B cell (primary cell): ENCODE measurements at regions of chr11 and their contacts with region 1.

Region 1: GRCh38 chr11:114166897-114167323 is 107.4 kb downstream of the ZBTB16 start:
- DNase-seq: no peak
- ATAC-seq: peak; percentile 22
- H3K4me3 ChIP-seq: peak overlapping the region in 1 of 5 experiments; percentile 40
- H3K4me3 Mint-ChIP-seq: peak overlapping the region; percentile 64
- H3K27ac ChIP-seq: no peak overlapping the region
- H3K27ac Mint-ChIP-seq: peak overlapping the region; percentile 32
- H3K4me1 ChIP-seq: peaks cover 76 to 81% of the 10 kb centered on the region in 2 donors
- H3K4me1 Mint-ChIP-seq: peaks cover 83% of the 10 kb centered on the region
- H3K27me3 ChIP-seq: no peaks in the 10 kb centered on the region
- H3K27me3 Mint-ChIP-seq: peaks cover 7% of the 10 kb centered on the region
- CTCF ChIP-seq: no peak

Region 2: DNA sequence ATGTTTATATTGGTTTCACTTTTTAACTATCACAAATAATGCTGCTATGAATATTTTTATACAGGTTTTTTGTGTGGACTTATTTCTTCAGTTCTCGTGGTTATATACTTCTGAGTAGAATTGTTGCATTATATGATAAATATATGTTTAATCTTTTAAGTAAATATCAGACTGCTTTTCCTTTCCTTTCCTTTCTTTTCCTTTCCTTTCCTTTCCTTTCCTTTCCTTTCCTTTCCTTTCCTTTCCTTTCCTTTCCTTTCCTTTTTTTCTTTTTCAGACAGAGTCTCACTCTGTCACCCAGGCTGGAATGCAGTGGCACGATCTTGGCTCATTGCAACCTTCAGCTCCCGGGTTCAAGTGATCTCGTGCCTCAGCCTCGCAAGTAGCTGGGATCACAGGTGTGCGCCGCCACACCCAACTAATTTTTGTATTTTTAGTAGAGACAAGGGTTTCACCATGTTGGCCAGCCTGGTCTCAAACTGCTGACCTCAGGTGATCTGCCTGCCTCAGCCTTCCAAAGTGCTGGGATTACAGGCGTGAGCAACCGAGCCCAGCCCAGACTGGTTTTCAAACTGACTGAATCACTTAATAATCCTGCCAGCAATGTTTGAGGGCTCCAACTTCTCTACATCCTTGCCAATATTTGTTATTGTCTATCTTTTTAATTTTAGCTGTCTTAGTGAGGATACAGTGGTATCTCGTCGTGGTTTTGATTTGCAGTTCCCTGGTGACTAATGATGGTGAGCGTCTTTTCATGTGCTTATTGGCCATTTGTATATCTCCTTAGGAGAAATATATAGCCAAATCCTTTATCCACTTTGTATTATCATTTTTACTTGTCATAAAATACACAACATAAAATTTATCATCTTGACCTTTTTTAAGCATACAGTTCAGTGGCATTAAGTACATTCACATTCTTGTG is 240.4 kb before region 1 on chr11:
- CTCF ChIA-PET with region 1: no interaction called
- POLR2A ChIA-PET with region 1: interaction called, 14 read pairs
- intact Hi-C with region 1: no loop called
- DNase-seq: no peak
- ATAC-seq: no peak
- H3K4me3 ChIP-seq: no peak overlapping the region
- H3K4me3 Mint-ChIP-seq: no peak overlapping the region
- H3K27ac ChIP-seq: no peak overlapping the region
- H3K27ac Mint-ChIP-seq: no peak overlapping the region
- H3K4me1 ChIP-seq: peaks cover 0 to 4% of the 10 kb centered on the region in 2 donors
- H3K4me1 Mint-ChIP-seq: peaks cover 3% of the 10 kb centered on the region
- H3K27me3 ChIP-seq: no peaks in the 10 kb centered on the region
- H3K27me3 Mint-ChIP-seq: peaks cover 10% of the 10 kb centered on the region
- CTCF ChIP-seq: no peak

Region 3: DNA sequence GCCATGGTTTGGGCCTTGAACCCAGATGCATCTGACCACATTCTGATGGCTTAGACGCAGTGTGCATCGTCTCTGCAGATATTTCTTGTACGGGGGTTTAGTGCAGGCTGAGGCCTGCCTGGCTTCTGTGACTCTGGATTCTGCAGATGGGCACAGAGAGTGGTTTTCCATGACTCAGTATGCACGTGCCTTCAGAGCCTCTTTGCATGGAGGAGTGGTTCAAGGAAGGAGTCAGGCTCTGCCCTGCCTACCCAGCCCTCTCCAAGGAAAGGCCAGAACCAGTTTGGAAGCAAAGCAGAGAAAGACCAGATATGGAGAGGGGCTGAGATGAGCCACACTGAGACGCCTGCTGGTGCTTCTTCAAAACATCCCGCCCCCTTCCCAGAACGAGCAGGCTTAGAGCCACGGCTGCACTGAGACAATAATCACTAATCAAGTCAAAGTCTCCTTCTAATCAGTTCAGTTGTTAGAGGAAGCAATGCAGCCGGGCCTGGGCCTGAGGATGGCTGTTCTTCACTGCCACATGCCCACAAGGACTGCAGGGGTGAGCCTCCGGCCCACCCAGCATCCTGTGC is 820.4 kb after region 1 on chr11:
- CTCF ChIA-PET with region 1: no interaction called
- POLR2A ChIA-PET with region 1: no interaction called
- intact Hi-C with region 1: no loop called
- DNase-seq: no peak
- ATAC-seq: no peak
- H3K4me3 ChIP-seq: no peak overlapping the region
- H3K4me3 Mint-ChIP-seq: no peak overlapping the region
- H3K27ac ChIP-seq: no peak overlapping the region
- H3K27ac Mint-ChIP-seq: no peak overlapping the region
- H3K4me1 ChIP-seq: no peaks in the 10 kb centered on the region
- H3K4me1 Mint-ChIP-seq: no peaks in the 10 kb centered on the region
- H3K27me3 ChIP-seq: no peaks in the 10 kb centered on the region
- H3K27me3 Mint-ChIP-seq: no peaks in the 10 kb centered on the region
- CTCF ChIP-seq: no peak